ENCODE measurements at regions of chr13 and their contacts with region 1.

Region 1: GRCh38 chr13:72990953-72991352 is 67.9 kb upstream of the KLF5 start:
- DNase-seq: no peak
- ATAC-seq: no peak
- H3K4me3 ChIP-seq: no peak overlapping the region
- H3K4me3 Mint-ChIP-seq: no peak overlapping the region
- H3K27ac ChIP-seq: no peak overlapping the region
- H3K27ac Mint-ChIP-seq: no peak overlapping the region
- H3K4me1 ChIP-seq: no peaks in the 10 kb centered on the region
- H3K4me1 Mint-ChIP-seq: no peaks in the 10 kb centered on the region
- H3K27me3 ChIP-seq: no peaks in the 10 kb centered on the region
- H3K27me3 Mint-ChIP-seq: no peaks in the 10 kb centered on the region

Region 2: DNA sequence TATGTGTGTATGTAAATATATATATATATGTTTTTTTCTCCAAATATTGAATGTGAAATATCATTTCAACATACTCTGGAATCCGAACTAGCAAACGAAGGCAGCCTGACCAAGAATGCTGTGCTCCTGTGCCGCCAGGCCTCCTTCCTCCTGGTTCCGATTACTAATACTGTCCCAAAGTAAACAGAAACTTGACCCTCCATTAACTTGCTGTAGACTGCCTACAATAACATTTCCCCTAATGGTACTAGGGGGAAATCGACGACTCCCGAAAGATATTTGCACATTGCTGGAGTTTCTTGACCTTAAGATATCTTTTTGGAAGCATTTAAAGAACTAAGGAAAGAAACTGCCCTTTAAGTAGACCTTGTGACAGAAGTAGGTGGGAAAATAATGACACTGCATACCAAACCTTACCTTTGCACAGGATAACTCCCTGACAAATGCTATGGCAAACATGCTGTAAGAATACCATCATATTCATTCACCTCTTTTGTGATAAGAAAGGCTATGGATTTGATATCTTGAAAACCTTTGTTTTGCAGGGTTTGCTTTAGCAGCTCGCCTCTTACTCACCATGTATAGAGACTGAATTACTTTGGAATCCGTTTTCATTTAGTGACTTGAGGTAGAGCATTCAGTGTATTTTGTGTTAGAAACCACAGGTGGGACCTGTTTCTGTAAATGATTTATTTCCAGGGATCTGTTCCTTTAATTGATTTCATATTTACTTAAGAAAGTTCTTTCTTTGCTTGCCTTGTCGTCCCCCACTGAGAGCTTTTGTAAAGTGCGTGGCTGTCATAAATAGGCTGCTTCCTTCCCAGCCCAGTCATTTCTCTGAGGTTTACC is 147.9 kb after region 1 on chr13:
- CTCF ChIA-PET with region 1: no interaction called
- POLR2A ChIA-PET with region 1: interaction called in 1 of 2 experiments, 10 read pairs
- DNase-seq: no peak
- ATAC-seq: no peak
- H3K4me3 ChIP-seq: no peak overlapping the region
- H3K4me3 Mint-ChIP-seq: no peak overlapping the region
- H3K27ac ChIP-seq: no peak overlapping the region
- H3K27ac Mint-ChIP-seq: no peak overlapping the region
- H3K4me1 ChIP-seq: no peaks in the 10 kb centered on the region
- H3K4me1 Mint-ChIP-seq: no peaks in the 10 kb centered on the region
- H3K27me3 ChIP-seq: no peaks in the 10 kb centered on the region
- H3K27me3 Mint-ChIP-seq: no peaks in the 10 kb centered on the region

Measured in T-cell (primary cell).